Breast epithelium (tissue), 4 donors: ENCODE measurements at regions of chr19 and their contacts with region 1.

Region 1: DNA sequence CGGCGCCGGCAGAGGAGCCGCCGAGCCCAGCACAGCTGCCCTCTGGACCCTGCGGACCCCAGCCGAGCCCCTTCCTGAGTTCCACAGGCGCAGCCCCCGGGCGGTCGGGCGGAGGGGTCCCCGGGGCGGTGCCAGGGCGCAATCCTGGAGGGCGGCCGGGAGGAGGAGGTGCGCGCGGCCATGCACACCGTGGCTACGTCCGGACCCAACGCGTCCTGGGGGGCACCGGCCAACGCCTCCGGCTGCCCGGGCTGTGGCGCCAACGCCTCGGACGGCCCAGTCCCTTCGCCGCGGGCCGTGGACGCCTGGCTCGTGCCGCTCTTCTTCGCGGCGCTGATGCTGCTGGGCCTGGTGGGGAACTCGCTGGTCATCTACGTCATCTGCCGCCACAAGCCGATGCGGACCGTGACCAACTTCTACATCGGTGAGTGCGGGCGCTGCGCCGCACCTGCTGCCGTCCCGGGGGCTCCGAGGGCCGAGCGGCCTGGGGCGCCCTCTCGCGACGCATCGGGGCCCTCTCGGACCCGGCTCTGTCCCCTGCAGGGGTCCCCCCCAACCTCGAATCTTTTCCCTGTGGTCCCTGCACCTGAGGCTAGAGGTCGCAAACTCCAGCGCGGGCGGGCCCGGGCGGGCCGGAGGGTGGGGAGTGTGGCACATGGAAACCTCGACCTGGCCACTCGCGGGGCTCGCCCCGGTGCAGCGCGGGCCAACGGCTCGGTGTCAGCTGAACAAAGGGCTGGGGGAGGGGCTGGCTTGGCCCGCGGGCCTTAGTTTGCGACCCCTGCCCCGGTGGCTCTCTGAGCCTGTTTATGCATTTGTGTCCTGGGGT is at the start of gene KISS1R:
- DNase-seq: no peak
- H3K4me3 ChIP-seq: peak within 1 kb of the TSS; percentile 13 to 71 (median 47)
- H3K27ac ChIP-seq: no peak within 1 kb of the TSS
- H3K4me1 ChIP-seq: peaks cover 14 to 31% of the 10 kb centered on the region in 2 donors
- H3K27me3 ChIP-seq: peaks cover 19 to 36% of the 10 kb centered on the region in 2 donors
- CTCF ChIP-seq: peak in 1 of 3 donors; percentile 33
- POLR2A ChIP-seq: no peak
- total RNA-seq, gene KISS1R: 0.15 to 0.33 TPM in 2 of 3 donors, not detected in the other

Region 2: DNA sequence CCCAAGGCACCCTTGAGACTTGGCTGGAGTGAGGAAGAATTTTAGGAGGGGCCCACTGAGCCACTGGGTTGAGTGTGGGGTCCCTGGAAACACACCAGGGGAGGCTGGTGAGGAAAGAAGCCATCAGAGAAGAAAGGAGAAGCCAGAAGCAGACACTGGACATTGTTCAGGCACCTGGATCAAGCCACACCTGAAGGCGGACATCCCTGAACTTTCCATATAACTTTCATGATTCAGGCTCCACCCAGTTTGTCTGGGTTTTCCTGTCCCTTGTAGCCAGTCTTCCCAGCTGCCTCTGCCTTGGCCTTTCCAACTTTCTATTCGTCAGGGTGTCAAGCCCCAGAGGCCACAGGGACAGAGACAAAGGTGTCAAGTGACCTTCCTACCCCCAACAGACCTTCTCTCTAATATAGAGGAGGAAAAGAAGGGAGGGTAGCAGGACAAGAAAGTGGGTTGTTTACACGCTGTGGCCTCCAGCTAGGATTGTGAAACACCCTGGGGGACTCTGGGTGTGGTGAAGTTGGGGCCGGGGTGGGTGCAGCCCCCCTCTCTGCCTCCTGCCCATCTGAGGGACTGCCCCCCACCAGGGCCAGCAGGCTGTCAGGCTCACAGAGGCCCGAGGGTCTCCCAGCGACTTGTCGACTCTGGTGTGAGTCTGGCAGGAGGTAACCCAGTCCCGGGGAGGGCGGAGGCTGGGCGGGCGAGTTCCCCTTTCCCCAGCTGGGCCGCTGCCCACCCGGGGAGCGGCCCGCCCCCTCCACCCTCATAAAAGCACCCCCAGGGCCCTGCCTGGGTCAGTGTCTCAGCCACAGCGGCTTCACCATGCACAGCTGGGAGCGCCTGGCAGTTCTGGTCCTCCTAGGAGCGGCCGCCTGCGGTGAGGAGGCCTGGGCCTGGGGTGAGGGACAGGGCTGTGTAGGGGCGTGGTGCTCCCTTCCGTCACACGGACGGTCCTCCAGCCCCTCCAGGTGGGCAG is 58.4 kb before region 1 on chr19 and contains the start of gene CFD:
- intact Hi-C with region 1: loop called (anchors 5 kb)
- DNase-seq: no peak
- H3K4me3 ChIP-seq: peak within 1 kb of the TSS; percentile 49 to 77 (median 52)
- H3K27ac ChIP-seq: peak within 1 kb of the TSS; percentile 60 to 75
- H3K4me1 ChIP-seq: peaks cover 6 to 10% of the 10 kb centered on the region in 2 donors
- H3K27me3 ChIP-seq: peaks cover 0 to 3% of the 10 kb centered on the region in 2 donors
- CTCF ChIP-seq: no peak
- POLR2A ChIP-seq: no peak
- total RNA-seq, gene CFD: 345 to 6,770 (median 797) TPM